Left cardiac atrium (tissue), 4 donors: ENCODE measurements at regions of chr16 and their contacts with region 1.

Region 1: DNA sequence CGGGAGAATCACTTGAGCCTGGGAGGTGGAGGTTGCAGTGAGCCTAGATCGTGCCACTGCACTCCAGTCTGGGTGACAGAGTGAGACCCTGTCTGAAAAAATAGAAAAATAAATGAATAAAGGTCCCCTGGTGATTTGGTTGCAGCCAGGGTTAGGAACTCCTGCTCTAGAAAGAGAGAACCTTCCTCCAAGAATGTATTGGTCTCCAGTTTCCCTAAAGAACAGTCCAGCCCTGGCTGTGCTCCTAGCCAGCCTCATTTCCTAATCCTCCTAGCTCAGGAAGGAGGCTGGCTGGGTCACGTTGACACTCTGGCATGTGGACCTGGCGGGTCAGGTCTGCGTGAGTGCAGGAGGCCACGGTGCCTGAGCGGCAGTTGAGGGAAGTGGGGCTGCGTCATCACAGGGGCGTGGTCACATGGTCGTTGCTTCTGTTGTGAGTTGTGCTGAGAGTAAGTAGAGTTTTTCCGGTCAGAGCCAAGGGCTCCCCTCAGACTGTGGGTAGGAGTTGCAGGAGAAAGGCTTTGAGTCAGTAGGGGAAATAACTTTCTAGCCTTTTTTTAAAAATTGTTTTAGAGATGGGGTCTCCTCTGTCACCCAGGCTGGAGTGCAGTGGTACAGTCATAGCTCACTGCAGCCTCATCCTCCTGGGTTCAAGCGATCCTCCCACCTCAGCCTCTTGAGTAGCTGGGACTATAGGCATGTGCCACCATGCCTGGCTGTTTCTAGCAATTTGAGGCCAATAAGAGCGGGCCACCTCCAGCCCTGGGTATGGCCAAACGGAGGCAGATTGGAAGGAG is 193.9 kb upstream of the CIBAR2 start:
- DNase-seq: peak; percentile 94
- ATAC-seq: peak; percentile 51 to 53

Region 2: GRCh38 chr16:85172455-85173145 is 133.6 kb before region 1 on chr16:
- intact Hi-C with region 1: no loop called
- DNase-seq: no peak
- ATAC-seq: peak; percentile 6 to 24

Region 3: GRCh38 chr16:85330694-85331188 is 24.5 kb after region 1 on chr16:
- intact Hi-C with region 1: no loop called
- DNase-seq: no peak
- ATAC-seq: peak; percentile 36 to 52

Region 4: GRCh38 chr16:85393674-85394483 is 87.7 kb after region 1 on chr16:
- intact Hi-C with region 1: loop called in 1 of 2 experiments (anchors 5 kb)
- DNase-seq: peak; percentile 73
- ATAC-seq: no peak